ENCODE measurements at regions of chr17 and their contacts with region 1.

Region 1: GRCh38 chr17:48618256-48618897 is 3.3 kb upstream of the HOXB8 start:
- DNase-seq: peak; percentile 68 to 75 (median 70)
- H3K4me3 ChIP-seq: no peak overlapping the region
- H3K4me3 Mint-ChIP-seq: peak overlapping the region in 1 of 2 donors; percentile 84
- H3K27ac ChIP-seq: no peak overlapping the region
- H3K27ac Mint-ChIP-seq: no peak overlapping the region
- H3K4me1 ChIP-seq: peaks cover 4 to 7% of the 10 kb centered on the region in 2 donors
- H3K4me1 Mint-ChIP-seq: peaks cover 13% of the 10 kb centered on the region
- H3K27me3 ChIP-seq: peaks cover 86 to 100% of the 10 kb centered on the region in 2 donors
- H3K27me3 Mint-ChIP-seq: peaks cover 99 to 100% (median 99%) of the 10 kb centered on the region in 3 donors
- CTCF ChIP-seq: peak; percentile 98

Region 2: DNA sequence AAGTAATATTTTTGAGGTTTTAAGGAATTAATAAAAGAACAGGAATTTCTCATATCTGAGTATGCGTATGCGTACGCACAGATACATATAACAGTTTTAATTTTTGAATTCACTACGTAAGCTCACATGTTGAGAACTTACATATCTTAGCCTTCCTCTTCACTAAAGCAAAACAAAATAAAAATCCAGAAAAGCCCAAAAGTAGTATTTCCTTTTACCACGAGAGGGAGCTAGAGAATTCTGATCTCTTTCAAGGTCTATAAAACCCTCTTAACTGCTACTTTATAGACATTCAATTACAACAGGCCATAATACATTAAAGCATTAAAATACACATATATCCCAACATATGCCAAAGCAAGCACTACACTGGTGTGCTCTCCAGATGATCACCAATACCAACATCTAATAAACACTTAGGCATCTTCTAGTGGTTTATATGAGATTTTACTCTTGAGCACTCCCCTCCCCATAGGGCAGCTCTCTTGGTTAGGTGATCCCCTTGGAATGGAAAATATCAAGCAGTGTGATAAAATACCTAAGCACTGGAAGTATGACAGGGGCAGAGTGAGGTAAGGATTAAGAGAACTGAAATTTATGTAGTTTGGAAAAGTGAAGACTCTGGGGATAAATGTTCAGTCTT is 282.4 kb before region 1 on chr17:
- intact Hi-C with region 1: loop called in 1 of 2 experiments (anchors 5 kb)
- DNase-seq: peak; percentile 11 to 43 (median 31)
- H3K4me3 ChIP-seq: no peak overlapping the region
- H3K4me3 Mint-ChIP-seq: no peak overlapping the region
- H3K27ac ChIP-seq: no peak overlapping the region
- H3K27ac Mint-ChIP-seq: no peak overlapping the region
- H3K4me1 ChIP-seq: no peaks in the 10 kb centered on the region
- H3K4me1 Mint-ChIP-seq: peaks cover 4% of the 10 kb centered on the region
- H3K27me3 ChIP-seq: peaks cover 6 to 34% of the 10 kb centered on the region in 2 donors
- H3K27me3 Mint-ChIP-seq: peaks cover 9 to 21% (median 9%) of the 10 kb centered on the region in 3 donors
- CTCF ChIP-seq: peak; percentile 79

Region 3: GRCh38 chr17:48646183-48647102 is 28.1 kb after region 1 on chr17:
- intact Hi-C with region 1: no loop called
- DNase-seq: no peak
- H3K4me3 ChIP-seq: peak overlapping the region in 1 of 3 experiments; percentile 72
- H3K4me3 Mint-ChIP-seq: peak overlapping the region; percentile 75 to 93
- H3K27ac ChIP-seq: no peak overlapping the region
- H3K27ac Mint-ChIP-seq: no peak overlapping the region
- H3K4me1 ChIP-seq: peaks cover 7 to 18% of the 10 kb centered on the region in 2 donors
- H3K4me1 Mint-ChIP-seq: peaks cover 17% of the 10 kb centered on the region
- H3K27me3 ChIP-seq: peaks cover 67 to 84% of the 10 kb centered on the region in 2 donors
- H3K27me3 Mint-ChIP-seq: peaks cover 79 to 96% (median 92%) of the 10 kb centered on the region in 3 donors
- CTCF ChIP-seq: no peak

Measured in CD14-positive monocyte (primary cell).